ENCODE measurements at regions of chr9 and their contacts with region 1.

Region 1: DNA sequence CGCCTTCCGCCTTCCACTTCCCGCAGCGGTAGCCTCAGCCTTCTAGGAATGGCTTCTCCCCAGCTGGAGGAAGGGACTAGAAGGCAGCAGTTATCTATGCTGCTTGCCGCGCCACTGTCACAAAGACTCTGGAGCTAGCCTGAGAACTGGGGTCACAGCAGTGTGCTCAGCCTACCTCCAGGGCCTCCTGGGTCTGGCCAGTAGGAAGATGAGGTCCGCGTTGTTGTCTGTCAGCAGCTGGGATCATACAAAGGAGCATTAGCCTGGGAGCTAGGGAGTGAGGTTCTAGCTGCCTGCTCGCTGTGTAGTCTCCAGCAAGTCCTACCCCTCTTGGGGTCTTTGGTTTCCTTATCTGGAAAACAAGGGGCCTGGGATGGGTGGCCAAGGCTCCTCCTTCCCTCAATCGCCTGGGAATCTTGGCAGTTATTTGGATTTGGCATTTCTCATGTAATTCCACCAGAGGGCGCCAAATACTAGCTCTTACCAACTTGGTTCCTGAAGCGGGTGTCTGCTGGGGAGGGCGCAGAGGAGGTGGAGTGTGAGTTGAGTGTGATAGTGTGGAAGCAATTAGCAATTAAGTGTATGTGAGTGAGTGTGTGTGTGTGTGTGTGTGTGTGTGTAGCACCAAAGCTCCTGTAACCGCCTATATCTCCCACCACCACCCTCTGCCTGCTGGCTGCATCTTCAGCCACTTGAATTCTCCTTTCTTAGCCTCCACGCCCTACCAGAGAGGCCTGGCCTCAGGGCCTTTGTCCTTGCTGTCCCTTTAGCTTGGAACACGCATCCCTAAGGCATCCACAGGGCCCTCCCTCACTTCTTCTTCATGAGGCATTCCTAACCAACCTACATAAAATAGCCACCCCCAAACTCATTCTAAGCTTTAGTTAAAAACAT is 97.1 kb downstream of the ENTREP1 start:
- DNase-seq: peak in 1 of 2 donors; percentile 51
- ATAC-seq: peak; percentile 89
- H3K4me3 ChIP-seq: no peak overlapping the region
- H3K27ac ChIP-seq: no peak overlapping the region
- H3K4me1 ChIP-seq: no peaks in the 10 kb centered on the region
- H3K27me3 ChIP-seq: no peaks in the 10 kb centered on the region

Region 2: GRCh38 chr9:69549310-69550202 is 127.4 kb after region 1 on chr9:
- intact Hi-C with region 1: loop called (anchors 5 kb)
- DNase-seq: no peak
- ATAC-seq: peak; percentile 38
- H3K4me3 ChIP-seq: no peak overlapping the region
- H3K27ac ChIP-seq: no peak overlapping the region
- H3K4me1 ChIP-seq: peaks cover 0 to 1% of the 10 kb centered on the region in 2 donors
- H3K27me3 ChIP-seq: no peaks in the 10 kb centered on the region

Region 3: GRCh38 chr9:69731348-69731747 is 309.2 kb after region 1 on chr9:
- intact Hi-C with region 1: loop called in 1 of 2 experiments (anchors 10 kb)
- DNase-seq: no peak
- ATAC-seq: no peak
- H3K4me3 ChIP-seq: no peak overlapping the region
- H3K27ac ChIP-seq: no peak overlapping the region
- H3K4me1 ChIP-seq: no peaks in the 10 kb centered on the region
- H3K27me3 ChIP-seq: no peaks in the 10 kb centered on the region

Region 4: GRCh38 chr9:69877854-69878514 is 455.8 kb after region 1 on chr9:
- intact Hi-C with region 1: loop called (anchors 5 kb)
- DNase-seq: no peak
- ATAC-seq: no peak
- H3K4me3 ChIP-seq: no peak overlapping the region
- H3K27ac ChIP-seq: no peak overlapping the region
- H3K4me1 ChIP-seq: no peaks in the 10 kb centered on the region
- H3K27me3 ChIP-seq: no peaks in the 10 kb centered on the region

Region 5: DNA sequence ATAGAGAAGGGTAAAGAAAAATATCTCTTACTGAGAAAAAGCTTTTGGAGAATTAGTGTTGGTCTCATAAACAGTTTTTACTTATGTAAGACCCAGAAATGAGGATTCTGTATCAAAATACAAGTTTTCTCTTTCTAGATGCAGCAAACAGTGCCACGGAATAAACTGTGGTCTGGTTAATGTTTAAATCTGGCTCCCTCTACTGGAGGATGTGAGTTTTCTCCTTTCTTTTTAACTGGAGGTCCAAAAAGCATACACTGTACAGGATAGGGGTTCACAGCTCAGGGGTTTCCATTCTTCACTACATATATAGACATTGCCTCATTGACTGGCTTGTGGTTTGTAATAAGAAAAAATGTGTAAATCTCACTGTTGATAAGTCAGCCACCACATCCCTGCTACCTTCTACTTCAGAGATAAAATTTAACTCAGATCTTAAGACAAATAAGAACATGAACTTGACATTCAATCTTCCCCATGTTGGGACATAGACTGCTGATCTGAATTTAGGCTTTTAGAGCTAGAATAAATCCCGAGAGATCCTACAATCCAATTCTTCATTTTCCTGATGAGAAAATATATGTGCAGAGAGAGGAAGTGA is 497.4 kb after region 1 on chr9:
- intact Hi-C with region 1: loop called (anchors 5 to 10 kb)
- DNase-seq: no peak
- ATAC-seq: peak; percentile 76
- H3K4me3 ChIP-seq: no peak overlapping the region
- H3K27ac ChIP-seq: no peak overlapping the region
- H3K4me1 ChIP-seq: no peaks in the 10 kb centered on the region
- H3K27me3 ChIP-seq: no peaks in the 10 kb centered on the region

Region 6: DNA sequence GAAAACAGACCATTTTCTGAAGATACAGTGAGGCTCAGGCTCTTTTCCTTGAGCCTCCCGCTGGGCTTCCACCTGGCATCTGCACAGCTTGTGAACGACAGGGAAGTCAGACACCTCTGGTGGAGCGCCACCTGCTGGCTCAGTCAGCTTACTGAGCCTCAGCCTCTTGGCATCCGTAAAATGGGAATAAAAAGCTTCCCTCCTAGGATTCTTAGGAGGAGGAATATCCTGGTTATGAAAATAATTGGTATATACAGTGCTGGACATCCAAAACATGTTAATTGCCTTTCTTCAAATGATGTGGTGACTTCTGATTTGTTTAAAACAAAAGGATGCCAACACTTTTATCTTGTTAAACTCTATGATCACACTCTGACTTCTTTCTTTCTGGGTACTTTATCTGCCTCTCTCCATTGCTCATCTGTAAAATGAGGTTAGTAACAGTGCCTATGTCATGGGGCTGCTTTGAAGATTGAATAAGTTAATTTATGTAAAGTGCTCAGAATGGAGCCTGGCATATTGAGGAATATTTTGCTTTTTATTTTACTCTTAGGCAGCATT is 689.0 kb after region 1 on chr9:
- intact Hi-C with region 1: loop called (anchors 5 to 10 kb)
- DNase-seq: peak; percentile 89 to 95
- ATAC-seq: peak; percentile 84
- H3K4me3 ChIP-seq: no peak overlapping the region
- H3K27ac ChIP-seq: no peak overlapping the region
- H3K4me1 ChIP-seq: no peaks in the 10 kb centered on the region
- H3K27me3 ChIP-seq: no peaks in the 10 kb centered on the region

Region 7: DNA sequence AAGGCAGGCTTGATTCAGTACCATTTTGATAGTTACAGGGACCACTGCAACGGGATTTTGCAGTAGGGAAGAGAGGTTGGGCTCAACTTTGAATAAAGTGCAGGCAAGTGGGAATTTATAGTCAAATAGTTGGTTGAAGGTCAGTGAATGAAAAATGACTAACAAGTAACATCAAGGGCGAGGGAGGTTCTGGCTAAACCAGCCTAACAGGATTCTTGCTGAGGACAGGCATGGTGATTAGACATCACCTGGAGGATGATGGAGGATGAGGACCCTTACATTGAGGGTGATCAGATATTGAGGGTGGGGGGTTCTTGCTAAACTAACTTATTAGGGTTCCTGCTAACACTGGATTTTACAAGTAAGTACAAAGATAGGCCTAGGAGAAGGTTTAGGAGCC is 770.6 kb after region 1 on chr9:
- intact Hi-C with region 1: no loop called
- DNase-seq: no peak
- ATAC-seq: no peak
- H3K4me3 ChIP-seq: no peak overlapping the region
- H3K27ac ChIP-seq: no peak overlapping the region
- H3K4me1 ChIP-seq: no peaks in the 10 kb centered on the region
- H3K27me3 ChIP-seq: no peaks in the 10 kb centered on the region

Measured in aorta (tissue), 5 donors.